ENCODE measurements at regions of chr9 and their contacts with region 1.

Region 1: GRCh38 chr9:97982683-97983588 is at the start of gene ANP32B:
- DNase-seq: peak; percentile 96
- H3K4me3 ChIP-seq: peak within 1 kb of the TSS; percentile 92
- H3K27ac ChIP-seq: peak within 1 kb of the TSS; percentile 85
- H3K4me1 ChIP-seq: peaks cover 66% of the 10 kb centered on the region
- CTCF ChIP-seq: peak; percentile 72
- total RNA-seq, gene ANP32B: 32.1 and 52.7 TPM in 2 replicates

Region 2: DNA sequence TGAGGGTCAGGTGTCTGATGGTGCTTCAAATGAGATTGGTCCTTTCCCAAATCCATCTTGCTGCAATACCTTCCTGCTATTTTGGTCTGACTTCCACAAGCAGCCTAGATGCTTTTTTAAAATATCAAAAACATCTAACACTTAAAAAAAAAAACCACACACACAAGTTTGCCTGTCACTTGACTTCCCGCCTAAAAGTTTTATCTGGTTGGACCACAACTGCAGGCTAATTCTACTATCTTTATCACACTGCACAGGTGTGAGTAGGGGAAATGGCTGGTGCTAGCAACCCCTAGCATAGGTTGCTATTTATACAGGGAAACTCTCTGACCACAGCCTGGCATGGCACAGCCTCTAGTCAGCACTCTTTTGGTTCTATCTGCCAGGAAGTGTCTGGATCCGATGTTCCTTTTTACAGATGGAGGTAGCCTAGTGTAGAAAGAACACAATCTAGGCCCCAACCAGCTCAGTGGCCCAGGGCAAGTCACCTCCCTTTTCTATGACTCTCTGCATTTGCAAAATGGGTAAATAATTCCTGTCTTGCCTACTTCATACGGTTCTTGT is 44.8 kb before region 1 on chr9 and contains the start of gene HEMGN:
- CTCF ChIA-PET with region 1: interaction called, 5 read pairs
- POLR2A ChIA-PET with region 1: interaction called, 5 read pairs
- intact Hi-C with region 1: loop called (anchors 1 kb)
- DNase-seq: peak; percentile 92
- H3K4me3 ChIP-seq: peak within 1 kb of the TSS; percentile 60
- H3K27ac ChIP-seq: peak within 1 kb of the TSS; percentile 91
- H3K4me1 ChIP-seq: peaks cover 93% of the 10 kb centered on the region
- CTCF ChIP-seq: no peak; the same call in 1 of the 2 replicates
- total RNA-seq, gene HEMGN: 4.3 and 5.4 TPM in 2 replicates

Region 3: DNA sequence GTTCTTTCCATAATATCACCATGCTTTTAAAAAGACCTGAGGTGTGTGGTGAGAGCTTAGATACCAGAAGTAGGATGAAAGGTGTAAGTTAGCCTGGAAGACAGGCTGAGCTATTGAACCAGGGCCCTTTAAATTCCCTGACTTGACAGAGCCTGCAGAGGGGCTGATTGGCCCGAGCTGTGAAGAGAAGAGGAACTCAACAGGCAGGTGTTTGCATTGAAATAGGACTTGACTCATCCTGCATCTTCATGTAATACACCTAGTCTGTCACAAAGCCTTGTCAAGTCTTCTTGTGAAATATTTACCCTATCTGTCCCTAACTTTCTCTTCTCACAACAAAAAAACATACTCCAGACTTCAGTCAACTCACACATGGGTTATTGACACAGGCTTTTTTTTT is 16.4 kb before region 1 on chr9:
- CTCF ChIA-PET with region 1: interaction called, 3 read pairs
- POLR2A ChIA-PET with region 1: interaction called, 39 read pairs
- intact Hi-C with region 1: no loop called
- DNase-seq: peak; percentile 49
- H3K4me3 ChIP-seq: no peak overlapping the region
- H3K27ac ChIP-seq: no peak overlapping the region
- H3K4me1 ChIP-seq: peaks cover 33% of the 10 kb centered on the region
- CTCF ChIP-seq: no peak

Region 4: DNA sequence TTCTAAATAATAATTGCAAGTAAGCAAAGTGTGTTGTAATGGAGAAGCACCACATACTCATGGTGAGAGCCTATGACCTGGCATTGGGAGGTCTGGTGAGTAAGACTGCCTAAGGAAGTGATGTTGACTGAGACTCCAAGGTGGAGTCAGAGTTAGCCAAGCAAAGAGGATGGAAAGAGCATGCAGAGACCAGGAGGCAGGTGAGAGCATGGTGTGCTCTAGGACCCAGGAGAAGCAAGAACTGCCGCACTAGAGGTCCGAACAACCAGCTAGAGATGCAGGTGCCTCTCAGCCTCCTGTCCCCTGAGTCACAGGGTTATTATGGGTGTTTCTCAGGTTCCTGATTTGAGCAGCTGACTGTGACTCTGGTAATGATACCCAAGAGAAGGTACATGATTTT is 27.5 kb after region 1 on chr9:
- CTCF ChIA-PET with region 1: no interaction called
- POLR2A ChIA-PET with region 1: interaction called, 6 read pairs
- intact Hi-C with region 1: loop called (anchors 1 kb)
- DNase-seq: peak; percentile 81
- H3K4me3 ChIP-seq: no peak overlapping the region
- H3K27ac ChIP-seq: peak overlapping the region; percentile 33
- H3K4me1 ChIP-seq: peaks cover 24% of the 10 kb centered on the region
- CTCF ChIP-seq: no peak

Region 5: DNA sequence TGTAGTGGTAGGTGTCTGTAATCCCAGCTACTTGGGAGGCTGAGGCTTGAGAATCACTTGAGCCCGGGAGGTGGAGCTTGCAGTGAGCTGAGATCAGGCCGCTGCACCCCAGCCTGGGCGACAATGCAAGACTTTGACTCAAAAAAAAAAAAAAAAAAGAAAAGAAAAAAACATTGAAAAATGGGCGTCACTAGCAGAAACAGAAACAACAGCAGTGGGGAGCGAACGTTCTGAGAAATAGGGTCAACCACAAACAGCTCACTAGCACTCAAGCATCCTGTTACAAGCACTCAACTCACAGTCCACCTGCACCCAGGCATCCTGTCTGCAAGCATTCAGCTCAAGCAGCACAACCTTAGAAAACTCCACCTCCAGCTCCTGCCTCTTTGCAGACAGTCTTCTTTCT is 118.9 kb after region 1 on chr9:
- CTCF ChIA-PET with region 1: no interaction called
- POLR2A ChIA-PET with region 1: interaction called, 4 read pairs
- intact Hi-C with region 1: loop called (anchors 2 kb)
- DNase-seq: peak; percentile 97
- H3K4me3 ChIP-seq: peak overlapping the region; percentile 59
- H3K27ac ChIP-seq: peak overlapping the region; percentile 95
- H3K4me1 ChIP-seq: peaks cover 98% of the 10 kb centered on the region
- CTCF ChIP-seq: no peak

Measured in OCI-LY7 (cell line).